ENCODE measurements at regions of chr12 and their contacts with region 1.

Region 1: DNA sequence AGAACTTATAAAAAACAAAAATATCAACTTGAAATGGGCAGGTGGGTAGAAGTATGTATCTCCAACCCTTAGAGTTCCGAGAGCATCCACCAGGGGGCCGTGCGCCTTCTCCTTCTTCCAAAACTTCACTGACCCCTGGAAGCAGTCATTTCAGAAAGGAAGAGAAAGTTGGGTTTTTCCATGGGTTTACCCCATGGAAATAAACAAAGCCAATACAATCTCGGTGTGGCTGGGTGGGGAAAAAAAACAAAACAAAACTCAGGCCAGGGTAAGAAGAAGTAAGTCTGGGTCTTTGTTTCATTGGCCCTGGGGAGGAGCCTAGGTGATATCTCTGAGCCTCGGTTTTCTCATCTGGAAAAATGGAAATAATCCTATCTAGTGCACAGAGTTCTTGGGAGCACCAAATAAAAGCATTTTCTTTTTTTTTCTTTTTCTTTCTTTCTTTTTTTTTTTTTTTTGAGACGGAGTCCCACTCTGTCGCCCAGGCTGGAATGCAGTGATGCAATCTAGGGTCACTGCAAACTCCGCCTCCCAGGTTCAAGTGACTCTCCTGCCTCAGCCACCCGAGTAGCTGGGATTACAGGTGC is 33.6 kb upstream of the HNF1A start:
- DNase-seq: peak; percentile 71
- H3K4me3 ChIP-seq: no peak overlapping the region; a peak in 1 of 4 replicates
- H3K27ac ChIP-seq: no peak overlapping the region
- H3K4me1 ChIP-seq: no peaks in the 10 kb centered on the region
- H3K27me3 ChIP-seq: no peaks in the 10 kb centered on the region; the same call in 1 of the 2 replicates
- CTCF ChIP-seq: peak; percentile 77
- EP300 ChIP-seq: no peak
- RAD21 ChIP-seq: peak; percentile 57

Region 2: GRCh38 chr12:120978296-120979219 is 33.8 kb after region 1 on chr12 and contains the start of gene HNF1A:
- CTCF ChIA-PET with region 1: interaction called, 11 read pairs
- POLR2A ChIA-PET with region 1: no interaction called
- DNase-seq: no peak
- H3K4me3 ChIP-seq: no peak within 1 kb of the TSS
- H3K27ac ChIP-seq: no peak within 1 kb of the TSS
- H3K4me1 ChIP-seq: no peaks in the 10 kb centered on the region
- H3K27me3 ChIP-seq: no peaks in the 10 kb centered on the region
- CTCF ChIP-seq: no peak
- EP300 ChIP-seq: no peak
- RAD21 ChIP-seq: no peak
- polyA plus RNA-seq, gene HNF1A: not detected in 2 replicates

Measured in SK-N-SH (cell line).